GM12878 (cell line): ENCODE measurements at regions of chr15 and their contacts with region 1.

Region 1: GRCh38 chr15:100703032-100703578 is 100.7 kb downstream of the ASB7 start:
- DNase-seq: peak; percentile 84
- ATAC-seq: peak; percentile 99
- H3K4me3 ChIP-seq: no peak overlapping the region
- H3K27ac ChIP-seq: no peak overlapping the region
- H3K4me1 ChIP-seq: peaks cover 10% of the 10 kb centered on the region
- H3K27me3 ChIP-seq: no peaks in the 10 kb centered on the region
- CTCF ChIP-seq: no peak
- EP300 ChIP-seq: peak; percentile 52 to 76; a peak in 2 of 4 replicates
- POLR2A ChIP-seq: no peak
- RAD21 ChIP-seq: no peak

Region 2: GRCh38 chr15:100833417-100834389 is 130.6 kb after region 1 on chr15:
- CTCF ChIA-PET with region 1: no interaction called
- POLR2A ChIA-PET with region 1: no interaction called
- RAD21 ChIA-PET with region 1: no interaction called
- SMC1A ChIA-PET with region 1: no interaction called
- in situ Hi-C with region 1: no loop called
- intact Hi-C with region 1: loop called (anchors 10 kb)
- DNase-seq: no peak
- ATAC-seq: peak; percentile 67
- H3K4me3 ChIP-seq: no peak overlapping the region
- H3K27ac ChIP-seq: no peak overlapping the region
- H3K4me1 ChIP-seq: no peaks in the 10 kb centered on the region; the same call in 1 of the 2 replicates
- H3K27me3 ChIP-seq: no peaks in the 10 kb centered on the region; a peak in 1 of 4 replicates
- CTCF ChIP-seq: no peak
- EP300 ChIP-seq: peak in 1 of 2 experiments; percentile 38; a peak in 1 of 4 replicates
- POLR2A ChIP-seq: no peak
- RAD21 ChIP-seq: no peak